Pancreas (tissue), 10 donors: ENCODE measurements at regions of chr1 and their contacts with region 1.

Region 1: DNA sequence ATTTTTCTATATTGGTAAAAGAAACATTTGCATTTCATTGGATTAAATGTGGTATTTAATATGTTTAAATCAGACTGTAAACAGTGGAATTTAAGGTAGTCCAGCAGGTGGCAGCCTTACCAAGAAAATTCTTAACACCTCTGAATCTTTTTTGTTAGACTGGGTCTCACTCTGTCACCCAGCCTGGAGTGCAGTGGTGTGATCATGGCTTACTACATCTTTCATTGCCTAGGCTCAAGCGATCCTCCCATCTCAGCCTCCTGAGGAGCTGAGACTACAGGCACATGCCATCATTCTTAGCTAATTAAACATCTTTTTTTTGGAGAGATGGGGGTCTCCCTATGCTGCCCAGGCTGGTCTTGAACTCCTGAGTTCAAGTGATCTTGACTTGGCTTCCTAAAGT is 98.8 kb downstream of the RABGAP1L start:
- DNase-seq: peak in 1 of 6 donors; percentile 36
- ATAC-seq: peak in 3 of 4 donors; percentile 71 to 83 (median 73)
- H3K4me3 ChIP-seq: no peak overlapping the region
- H3K27ac ChIP-seq: no peak overlapping the region
- H3K4me1 ChIP-seq: no peaks in the 10 kb centered on the region
- H3K27me3 ChIP-seq: no peaks in the 10 kb centered on the region
- CTCF ChIP-seq: peak in 3 of 4 donors; percentile 18 to 39 (median 37)

Region 2: GRCh38 chr1:174743654-174744561 is 485.8 kb after region 1 on chr1:
- intact Hi-C with region 1: loop called in 2 of 3 experiments (anchors 5 to 10 kb)
- DNase-seq: no peak
- ATAC-seq: peak in 3 of 4 donors; percentile 60 to 69 (median 64)
- H3K4me3 ChIP-seq: no peak overlapping the region
- H3K27ac ChIP-seq: no peak overlapping the region
- H3K4me1 ChIP-seq: no peaks in the 10 kb centered on the region
- H3K27me3 ChIP-seq: no peaks in the 10 kb centered on the region
- CTCF ChIP-seq: peak; percentile 32 to 57 (median 55)